ENCODE measurements at regions of chr15 and their contacts with region 1.

Region 1: GRCh38 chr15:72231066-72231846 is at the start of gene PKM:
- DNase-seq: peak; percentile 98
- ATAC-seq: peak; percentile 58
- H3K4me3 Mint-ChIP-seq: peak within 1 kb of the TSS; percentile 100
- H3K27ac Mint-ChIP-seq: peak within 1 kb of the TSS; percentile 99
- H3K4me1 Mint-ChIP-seq: peaks cover 38% of the 10 kb centered on the region
- H3K27me3 Mint-ChIP-seq: no peaks in the 10 kb centered on the region
- total RNA-seq, gene PKM: 965 to 980 TPM

Region 2: DNA sequence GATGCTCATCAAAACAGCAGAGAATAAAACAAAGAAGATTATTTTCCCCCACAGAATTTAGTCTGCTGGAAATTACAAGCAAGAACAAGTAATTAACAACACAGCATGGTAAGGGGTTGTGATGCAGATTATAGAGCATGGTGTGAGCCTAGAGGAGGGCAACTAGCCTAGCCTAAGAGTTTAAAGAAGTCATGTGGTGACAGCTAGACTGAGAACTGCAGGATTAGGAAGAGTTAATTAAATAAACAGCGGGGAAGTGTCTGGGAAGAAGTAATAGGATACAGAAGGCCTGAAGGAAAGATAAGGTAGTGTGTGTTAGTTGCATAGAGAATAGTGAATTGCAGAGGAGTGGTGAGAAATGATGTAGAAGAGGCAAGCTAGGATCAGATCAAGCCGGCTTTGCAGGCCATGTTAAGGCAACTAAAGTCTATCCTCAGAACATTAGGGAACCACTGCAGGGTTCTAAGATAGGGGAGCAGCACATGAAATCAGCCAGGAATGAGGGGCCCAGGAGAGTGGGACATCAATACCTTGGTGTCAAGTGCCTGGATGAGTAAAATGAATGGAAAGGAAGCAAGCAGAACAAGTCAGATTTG is 11.6 kb after region 1 on chr15:
- POLR2A ChIA-PET with region 1: interaction called, 25 read pairs
- DNase-seq: no peak
- ATAC-seq: no peak
- H3K4me3 Mint-ChIP-seq: no peak overlapping the region
- H3K27ac Mint-ChIP-seq: no peak overlapping the region
- H3K4me1 Mint-ChIP-seq: peaks cover 2% of the 10 kb centered on the region
- H3K27me3 Mint-ChIP-seq: no peaks in the 10 kb centered on the region

Region 3: DNA sequence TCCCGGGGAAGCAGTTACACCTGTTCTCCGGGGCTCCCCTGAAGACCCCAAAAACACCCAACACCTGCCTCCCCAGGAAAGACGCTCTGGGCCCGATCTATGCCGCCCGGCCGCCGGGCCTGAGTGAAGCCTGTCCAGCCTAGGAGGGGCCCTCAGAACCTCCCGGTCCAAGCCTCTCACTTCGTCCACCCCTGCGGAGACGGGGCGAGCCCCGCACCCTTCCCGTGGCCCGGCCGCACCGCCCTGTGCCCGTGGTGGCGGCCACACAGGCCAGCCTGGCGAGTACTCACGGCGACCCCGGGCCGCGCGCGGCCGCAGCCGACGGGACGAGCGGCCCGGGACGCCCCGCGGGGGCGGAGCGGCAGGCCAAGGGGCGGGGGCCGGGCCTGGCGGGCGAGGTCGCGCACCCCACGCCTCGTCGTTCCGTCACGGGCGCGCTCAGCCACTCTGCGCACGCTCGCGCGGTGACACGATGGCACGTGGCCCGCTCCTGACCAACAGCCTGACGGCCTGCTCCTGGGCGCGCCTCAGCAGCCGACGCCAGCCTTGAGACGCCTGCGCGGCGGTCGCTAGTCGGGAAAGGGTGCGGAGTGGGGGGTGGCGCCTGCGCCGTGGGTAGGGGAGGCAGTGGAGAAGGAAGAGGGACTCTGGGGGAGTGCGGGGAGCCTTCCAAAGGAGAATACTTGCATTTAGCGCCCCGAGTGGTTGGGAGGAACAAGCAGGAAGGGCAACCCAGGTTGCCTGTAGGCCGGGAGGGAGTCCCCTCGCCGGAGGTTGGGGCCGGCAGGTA is 41.2 kb after region 1 on chr15 and contains the start of gene PARP6:
- POLR2A ChIA-PET with region 1: interaction called, 16 read pairs
- DNase-seq: peak; percentile 97
- ATAC-seq: peak; percentile 99
- H3K4me3 Mint-ChIP-seq: peak within 1 kb of the TSS; percentile 91
- H3K27ac Mint-ChIP-seq: peak within 1 kb of the TSS; percentile 84
- H3K4me1 Mint-ChIP-seq: peaks cover 28% of the 10 kb centered on the region
- H3K27me3 Mint-ChIP-seq: peaks cover 8% of the 10 kb centered on the region
- total RNA-seq, gene PARP6: 86.7 to 90.2 TPM

Region 4: DNA sequence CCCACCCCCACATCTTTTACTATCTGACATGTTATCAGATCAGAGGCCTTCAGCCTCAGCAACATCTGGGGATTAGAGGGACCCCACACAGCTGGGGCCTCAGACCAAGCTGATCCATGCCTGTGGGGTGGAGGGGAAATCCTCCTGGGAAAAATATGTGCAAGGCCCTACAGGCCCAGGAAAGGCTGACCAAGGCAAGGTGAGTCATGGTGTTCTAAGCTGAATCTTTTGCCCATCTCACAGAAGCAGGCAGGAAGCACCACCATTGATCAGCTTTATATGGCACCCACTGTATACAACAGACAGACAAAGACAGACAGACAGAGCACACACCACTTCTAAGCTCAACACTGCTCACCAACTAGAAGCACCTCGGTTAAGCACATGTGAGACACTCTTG is 53.5 kb after region 1 on chr15:
- POLR2A ChIA-PET with region 1: no interaction called
- DNase-seq: no peak
- ATAC-seq: no peak
- H3K4me3 Mint-ChIP-seq: no peak overlapping the region
- H3K27ac Mint-ChIP-seq: no peak overlapping the region
- H3K4me1 Mint-ChIP-seq: peaks cover 1% of the 10 kb centered on the region
- H3K27me3 Mint-ChIP-seq: no peaks in the 10 kb centered on the region